Caco-2 (cell line): ENCODE measurements at regions of chr20 and their contacts with region 1.

Region 1: DNA sequence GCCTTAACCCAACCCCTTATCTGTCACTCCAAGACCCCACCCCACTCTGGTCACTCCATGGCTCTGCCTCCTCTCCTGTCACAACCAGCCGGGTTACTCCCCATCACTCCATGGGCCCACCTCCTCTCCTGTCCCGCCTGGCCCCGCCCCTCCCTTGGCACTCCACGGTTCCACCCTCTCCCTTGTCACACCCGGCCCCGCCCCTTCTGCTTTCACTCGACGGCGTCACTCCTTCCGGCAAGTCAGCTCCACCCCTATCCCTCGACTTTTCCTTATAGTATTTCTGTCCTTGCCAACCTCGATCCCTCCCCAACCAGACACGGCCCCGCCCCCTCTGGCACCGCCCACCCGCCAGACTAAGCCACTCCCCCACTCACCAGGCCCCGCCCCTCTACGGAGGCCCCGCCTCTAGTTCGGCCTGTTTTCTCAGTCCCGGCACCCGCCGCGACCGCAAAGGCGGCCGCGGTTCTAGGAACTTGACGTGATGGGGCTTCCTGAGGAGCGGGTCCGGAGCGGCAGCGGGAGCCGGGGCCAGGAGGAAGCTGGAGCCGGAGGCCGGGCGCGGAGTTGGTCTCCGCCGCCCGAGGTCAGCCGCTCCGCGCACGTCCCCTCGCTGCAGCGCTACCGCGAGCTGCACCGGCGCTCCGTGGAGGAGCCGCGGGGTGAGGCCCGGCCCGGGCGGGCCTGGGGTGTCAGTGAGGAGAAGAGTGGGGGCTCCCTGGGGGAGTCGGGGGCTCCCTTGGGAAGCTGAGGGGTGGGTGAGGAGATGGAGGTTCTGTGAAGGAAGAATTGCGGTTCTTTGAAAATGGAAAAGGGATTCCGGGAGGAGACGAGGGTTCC is at the start of gene ACSS2:
- DNase-seq: peak; percentile 100
- H3K4me3 ChIP-seq: peak within 1 kb of the TSS; percentile 71
- H3K4me3 Mint-ChIP-seq: peak within 1 kb of the TSS; percentile 86
- H3K27ac Mint-ChIP-seq: peak within 1 kb of the TSS; percentile 84
- H3K4me1 ChIP-seq: peaks cover 33% of the 10 kb centered on the region
- H3K4me1 Mint-ChIP-seq: peaks cover 50% of the 10 kb centered on the region
- H3K27me3 ChIP-seq: no peaks in the 10 kb centered on the region
- H3K27me3 Mint-ChIP-seq: no peaks in the 10 kb centered on the region
- CTCF ChIP-seq: peak in 1 of 2 experiments; percentile 0
- total RNA-seq, gene ACSS2: 64.5 and 76.0 TPM in 2 replicates

Region 2: DNA sequence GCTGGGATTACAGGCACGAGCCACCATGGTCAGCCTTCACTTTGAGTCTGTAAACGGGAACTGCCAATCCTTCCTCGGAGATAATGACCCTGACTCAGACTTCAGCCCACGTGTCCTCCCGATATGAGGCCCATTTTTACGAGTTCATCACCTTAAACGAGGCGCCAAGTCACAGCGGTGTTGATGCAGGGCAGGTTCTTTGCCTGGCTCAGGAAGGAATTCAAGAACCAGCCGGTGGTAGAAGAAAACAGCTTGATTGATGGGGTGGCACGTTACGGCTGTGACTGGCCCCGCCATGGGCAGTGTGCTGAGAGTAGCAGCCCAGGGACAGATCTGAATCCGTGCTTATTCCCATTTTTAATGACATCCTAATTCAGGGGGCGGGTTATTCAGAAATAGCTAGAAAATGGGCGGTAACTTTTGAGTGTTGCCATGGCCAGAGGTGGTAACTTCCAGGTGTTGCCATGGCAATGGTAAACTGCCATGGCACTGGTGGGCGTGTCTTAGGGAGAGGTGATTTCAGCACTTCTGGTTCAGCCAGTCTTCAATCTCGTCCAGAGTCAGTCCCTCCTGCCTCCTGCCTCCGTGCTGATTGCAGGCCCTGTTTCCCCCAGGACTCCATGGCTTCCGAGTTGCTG is 327.0 kb before region 1 on chr20:
- CTCF ChIA-PET with region 1: no interaction called
- POLR2A ChIA-PET with region 1: no interaction called
- intact Hi-C with region 1: no loop called
- DNase-seq: peak; percentile 74 to 76
- H3K4me3 ChIP-seq: no peak overlapping the region
- H3K4me3 Mint-ChIP-seq: no peak overlapping the region
- H3K27ac Mint-ChIP-seq: peak overlapping the region; percentile 58
- H3K4me1 ChIP-seq: no peaks in the 10 kb centered on the region
- H3K4me1 Mint-ChIP-seq: peaks cover 8% of the 10 kb centered on the region
- H3K27me3 ChIP-seq: no peaks in the 10 kb centered on the region
- H3K27me3 Mint-ChIP-seq: no peaks in the 10 kb centered on the region
- CTCF ChIP-seq: no peak

Region 3: DNA sequence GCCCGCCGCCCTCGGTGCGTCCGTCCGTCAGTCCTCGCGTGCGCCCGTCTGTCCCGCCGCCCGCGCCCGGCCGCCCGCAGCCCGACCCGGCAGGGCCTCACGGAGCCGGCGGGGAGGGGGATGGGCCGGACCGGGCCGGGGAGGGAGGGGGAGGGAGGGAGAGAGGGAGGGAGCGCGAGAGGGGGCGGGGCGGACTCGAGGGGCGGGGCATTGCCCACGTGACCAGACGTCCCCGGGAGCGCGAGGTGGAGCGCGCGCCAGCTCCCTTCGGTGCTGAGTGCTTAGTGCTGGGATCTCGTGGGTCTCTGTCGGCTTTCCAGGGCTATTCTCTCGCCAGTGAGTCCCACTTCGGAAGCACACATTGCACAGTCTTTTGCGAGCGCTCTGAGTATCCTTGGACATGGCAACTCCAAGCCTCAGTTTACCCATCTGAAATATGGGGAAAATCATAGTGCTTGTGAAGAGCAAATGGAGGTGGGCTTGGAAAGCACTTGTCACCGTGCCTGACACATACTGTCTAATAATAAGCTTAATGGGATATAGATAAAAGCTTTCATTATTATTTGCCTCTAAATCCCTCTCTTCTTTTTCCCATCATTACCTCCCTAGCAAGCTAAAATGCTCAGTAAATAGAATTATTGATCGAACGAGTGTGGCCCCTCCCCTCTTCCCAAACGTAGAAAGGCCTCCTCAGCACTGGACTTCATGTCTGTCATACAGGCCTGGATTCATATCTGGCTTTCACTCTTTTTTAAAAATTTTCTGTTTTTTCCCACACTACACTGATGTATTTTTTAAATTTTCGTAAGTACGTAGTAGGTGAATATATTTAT is 50.6 kb before region 1 on chr20 and contains the start of gene NCOA6:
- CTCF ChIA-PET with region 1: interaction called, 10 read pairs
- POLR2A ChIA-PET with region 1: interaction called, 15 read pairs
- intact Hi-C with region 1: loop called (anchors 1 kb)
- DNase-seq: peak; percentile 92 to 94
- H3K4me3 ChIP-seq: peak within 1 kb of the TSS; percentile 97
- H3K4me3 Mint-ChIP-seq: peak within 1 kb of the TSS; percentile 92
- H3K27ac Mint-ChIP-seq: peak within 1 kb of the TSS; percentile 83
- H3K4me1 ChIP-seq: peaks cover 15% of the 10 kb centered on the region
- H3K4me1 Mint-ChIP-seq: peaks cover 20% of the 10 kb centered on the region
- H3K27me3 ChIP-seq: no peaks in the 10 kb centered on the region
- H3K27me3 Mint-ChIP-seq: no peaks in the 10 kb centered on the region
- CTCF ChIP-seq: no peak
- total RNA-seq, gene NCOA6: 65.1 and 72.7 TPM in 2 replicates

Region 4: DNA sequence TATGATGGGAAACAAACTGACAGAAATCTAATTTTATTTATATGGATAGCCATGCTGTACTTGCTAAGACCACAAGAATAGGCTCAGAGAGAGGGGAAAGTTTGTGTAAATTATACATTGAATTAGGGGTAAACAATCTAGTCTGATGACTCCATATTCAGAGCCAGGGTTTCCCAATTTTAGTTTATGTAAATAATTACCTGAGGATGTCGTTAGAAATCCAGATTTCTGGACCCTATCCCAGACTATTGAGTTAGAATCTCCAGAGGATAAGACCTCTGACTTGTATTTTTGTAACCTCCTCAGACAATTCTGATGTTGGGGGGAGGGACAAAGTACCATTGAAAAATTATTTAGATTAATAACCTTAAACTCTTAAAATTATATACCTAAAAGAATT is 18.3 kb after region 1 on chr20:
- CTCF ChIA-PET with region 1: interaction called, 3 read pairs
- POLR2A ChIA-PET with region 1: interaction called, 13 read pairs
- intact Hi-C with region 1: no loop called
- DNase-seq: no peak
- H3K4me3 ChIP-seq: no peak overlapping the region
- H3K4me3 Mint-ChIP-seq: no peak overlapping the region
- H3K27ac Mint-ChIP-seq: no peak overlapping the region
- H3K4me1 ChIP-seq: peaks cover 30% of the 10 kb centered on the region
- H3K4me1 Mint-ChIP-seq: peaks cover 23% of the 10 kb centered on the region
- H3K27me3 ChIP-seq: no peaks in the 10 kb centered on the region
- H3K27me3 Mint-ChIP-seq: no peaks in the 10 kb centered on the region
- CTCF ChIP-seq: no peak

Region 5: DNA sequence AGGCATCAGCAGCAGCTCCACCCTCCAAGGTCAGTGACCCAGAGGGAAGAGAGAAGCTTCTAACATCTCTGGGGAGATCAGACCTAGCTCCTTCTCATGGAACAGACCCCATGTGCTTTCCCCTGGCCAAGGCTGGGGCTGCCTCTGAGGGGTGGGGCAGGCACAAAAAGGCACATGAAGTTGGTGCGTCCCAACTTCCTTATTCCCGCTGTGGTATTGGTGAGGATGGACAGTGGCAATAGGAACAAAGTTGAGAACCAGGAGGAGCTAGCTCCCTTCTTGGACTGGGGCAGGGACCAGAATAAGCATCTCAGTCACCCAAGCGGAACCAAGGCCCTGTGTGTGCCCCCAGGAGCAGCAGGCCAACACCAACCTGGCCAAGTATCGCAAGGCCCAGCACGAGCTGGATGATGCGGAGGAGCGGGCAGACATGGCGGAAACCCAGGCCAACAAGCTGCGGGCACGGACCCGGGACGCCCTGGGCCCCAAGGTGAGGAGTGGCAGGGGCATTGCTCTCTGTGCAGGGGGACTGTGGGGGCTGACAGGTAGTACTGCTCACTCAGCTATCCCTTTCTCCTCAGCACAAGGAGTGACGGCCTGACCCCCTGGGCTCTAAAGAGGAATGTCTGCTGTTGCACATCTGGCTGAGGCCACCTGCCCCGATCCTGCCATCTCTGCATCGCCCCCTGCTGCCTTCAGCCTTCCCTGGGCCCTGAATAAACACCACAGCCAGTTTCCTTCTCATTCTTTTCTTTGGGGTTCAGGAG is 125.4 kb after region 1 on chr20:
- CTCF ChIA-PET with region 1: interaction called, 17 read pairs
- POLR2A ChIA-PET with region 1: no interaction called
- intact Hi-C with region 1: loop called (anchors 5 kb)
- DNase-seq: peak; percentile 57 to 60
- H3K4me3 ChIP-seq: no peak overlapping the region
- H3K4me3 Mint-ChIP-seq: no peak overlapping the region
- H3K27ac Mint-ChIP-seq: no peak overlapping the region
- H3K4me1 ChIP-seq: no peaks in the 10 kb centered on the region
- H3K4me1 Mint-ChIP-seq: no peaks in the 10 kb centered on the region
- H3K27me3 ChIP-seq: no peaks in the 10 kb centered on the region
- H3K27me3 Mint-ChIP-seq: no peaks in the 10 kb centered on the region
- CTCF ChIP-seq: peak; percentile 36 to 44

Region 6: DNA sequence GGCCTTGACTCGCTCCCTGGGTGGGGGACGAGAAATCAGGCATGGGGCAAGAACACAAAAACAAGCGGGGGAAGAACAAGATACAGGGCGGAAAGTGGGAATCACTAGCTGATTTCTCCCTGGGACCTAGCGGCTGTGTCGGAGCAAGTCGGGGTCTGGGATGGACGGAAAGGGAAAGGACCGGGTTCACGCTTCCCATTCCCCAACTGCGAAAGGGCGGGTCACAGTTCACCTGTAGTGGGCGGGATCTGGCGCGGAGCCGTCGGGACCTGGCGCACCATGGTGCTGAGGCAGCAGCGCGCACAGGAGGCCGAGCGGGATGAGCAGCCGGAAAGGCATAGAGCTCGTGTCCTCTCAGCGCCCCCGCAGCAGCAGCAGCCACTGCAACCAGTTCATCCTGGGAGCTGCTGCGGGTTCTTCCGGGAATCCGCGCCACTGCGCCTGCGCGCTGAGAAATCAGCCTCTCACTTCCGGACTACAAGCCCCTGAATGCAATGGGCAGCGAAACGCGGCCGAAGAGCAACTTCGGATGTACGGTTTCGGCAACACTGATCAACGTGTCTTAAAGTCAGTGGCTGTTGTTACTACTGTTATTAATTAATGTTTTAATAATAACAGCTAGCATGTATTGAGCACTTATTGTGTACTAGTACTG is 270.7 kb after region 1 on chr20 and contains the start of gene EDEM2:
- CTCF ChIA-PET with region 1: interaction called, 8 read pairs
- POLR2A ChIA-PET with region 1: no interaction called
- intact Hi-C with region 1: loop called (anchors 1 kb)
- DNase-seq: peak; percentile 100
- H3K4me3 ChIP-seq: peak within 1 kb of the TSS; percentile 53
- H3K4me3 Mint-ChIP-seq: peak within 1 kb of the TSS; percentile 88
- H3K27ac Mint-ChIP-seq: peak within 1 kb of the TSS; percentile 96
- H3K4me1 ChIP-seq: peaks cover 20% of the 10 kb centered on the region
- H3K4me1 Mint-ChIP-seq: peaks cover 39% of the 10 kb centered on the region
- H3K27me3 ChIP-seq: no peaks in the 10 kb centered on the region
- H3K27me3 Mint-ChIP-seq: no peaks in the 10 kb centered on the region
- CTCF ChIP-seq: peak in 1 of 2 experiments; percentile 18
- total RNA-seq, gene EDEM2: 41.2 and 42.4 TPM in 2 replicates

Region 7: GRCh38 chr20:35269055-35269781 is 392.8 kb after region 1 on chr20:
- CTCF ChIA-PET with region 1: interaction called, 13 read pairs
- POLR2A ChIA-PET with region 1: no interaction called
- intact Hi-C with region 1: loop called (anchors 1 kb)
- DNase-seq: peak; percentile 88 to 93
- H3K4me3 ChIP-seq: no peak overlapping the region
- H3K4me3 Mint-ChIP-seq: no peak overlapping the region
- H3K27ac Mint-ChIP-seq: peak overlapping the region; percentile 38
- H3K4me1 ChIP-seq: peaks cover 19% of the 10 kb centered on the region
- H3K4me1 Mint-ChIP-seq: peaks cover 21% of the 10 kb centered on the region
- H3K27me3 ChIP-seq: no peaks in the 10 kb centered on the region
- H3K27me3 Mint-ChIP-seq: no peaks in the 10 kb centered on the region
- CTCF ChIP-seq: peak; percentile 97 to 99

Region 8: GRCh38 chr20:35454881-35455609 is 578.7 kb after region 1 on chr20 and contains the start of gene CEP250:
- CTCF ChIA-PET with region 1: no interaction called
- POLR2A ChIA-PET with region 1: interaction called, 10 read pairs
- intact Hi-C with region 1: no loop called
- DNase-seq: peak; percentile 100
- H3K4me3 ChIP-seq: peak within 1 kb of the TSS; percentile 50
- H3K4me3 Mint-ChIP-seq: peak within 1 kb of the TSS; percentile 93
- H3K27ac Mint-ChIP-seq: peak within 1 kb of the TSS; percentile 100
- H3K4me1 ChIP-seq: peaks cover 5% of the 10 kb centered on the region
- H3K4me1 Mint-ChIP-seq: peaks cover 29% of the 10 kb centered on the region
- H3K27me3 ChIP-seq: no peaks in the 10 kb centered on the region
- H3K27me3 Mint-ChIP-seq: no peaks in the 10 kb centered on the region
- CTCF ChIP-seq: no peak
- total RNA-seq, gene CEP250: 117 and 137 TPM in 2 replicates